Activated naive CD4-positive, alpha-beta T cell treated with anti-CD3 and anti-CD28 coated beads for 36 hours (primary cell): ENCODE measurements at regions of chr12 and their contacts with region 1.

Region 1: GRCh38 chr12:102879144-102879763 is 37.8 kb downstream of the PAH start:
- DNase-seq: peak; percentile 51
- H3K4me3 Mint-ChIP-seq: no peak overlapping the region
- H3K27ac Mint-ChIP-seq: no peak overlapping the region
- H3K4me1 Mint-ChIP-seq: no peaks in the 10 kb centered on the region
- H3K27me3 Mint-ChIP-seq: peaks cover 13% of the 10 kb centered on the region

Region 2: GRCh38 chr12:102169922-102170621 is 709.2 kb before region 1 on chr12:
- CTCF ChIA-PET with region 1: no interaction called
- intact Hi-C with region 1: loop called (anchors 1 kb)
- DNase-seq: peak; percentile 30
- H3K4me3 Mint-ChIP-seq: no peak overlapping the region
- H3K27ac Mint-ChIP-seq: no peak overlapping the region
- H3K4me1 Mint-ChIP-seq: peaks cover 11% of the 10 kb centered on the region
- H3K27me3 Mint-ChIP-seq: no peaks in the 10 kb centered on the region

Region 3: DNA sequence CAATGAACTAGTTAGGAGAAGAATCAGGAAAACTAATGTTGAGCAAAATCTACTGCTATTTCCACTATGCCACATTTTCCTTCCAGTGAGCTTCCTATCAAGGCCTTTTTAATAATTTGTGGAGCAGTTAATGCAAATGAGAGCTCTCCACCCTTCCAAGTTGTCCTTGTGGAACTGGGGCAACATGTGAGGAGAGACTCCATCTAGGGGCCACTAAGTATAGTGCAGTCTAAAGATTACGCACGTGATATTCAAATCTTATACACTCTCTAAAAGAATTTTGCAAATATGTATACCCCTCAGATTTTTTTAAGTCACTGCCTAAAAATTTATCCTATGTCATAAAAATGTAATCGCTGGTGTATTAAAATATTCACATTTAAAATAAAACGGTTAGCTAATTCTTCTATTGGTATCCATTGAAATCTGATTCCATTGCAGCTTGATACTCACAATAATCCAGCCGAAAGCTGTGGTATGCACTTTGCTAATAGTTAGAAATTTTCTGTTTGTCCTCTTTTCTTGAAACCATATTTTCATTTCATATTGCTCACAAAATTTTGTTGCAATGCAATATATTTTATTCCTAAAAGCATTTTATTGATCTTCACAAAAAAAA is 62.3 kb before region 1 on chr12:
- CTCF ChIA-PET with region 1: interaction called, 6 read pairs
- intact Hi-C with region 1: loop called (anchors 5 kb)
- DNase-seq: no peak
- H3K4me3 Mint-ChIP-seq: no peak overlapping the region
- H3K27ac Mint-ChIP-seq: no peak overlapping the region
- H3K4me1 Mint-ChIP-seq: no peaks in the 10 kb centered on the region
- H3K27me3 Mint-ChIP-seq: peaks cover 29% of the 10 kb centered on the region

Region 4: DNA sequence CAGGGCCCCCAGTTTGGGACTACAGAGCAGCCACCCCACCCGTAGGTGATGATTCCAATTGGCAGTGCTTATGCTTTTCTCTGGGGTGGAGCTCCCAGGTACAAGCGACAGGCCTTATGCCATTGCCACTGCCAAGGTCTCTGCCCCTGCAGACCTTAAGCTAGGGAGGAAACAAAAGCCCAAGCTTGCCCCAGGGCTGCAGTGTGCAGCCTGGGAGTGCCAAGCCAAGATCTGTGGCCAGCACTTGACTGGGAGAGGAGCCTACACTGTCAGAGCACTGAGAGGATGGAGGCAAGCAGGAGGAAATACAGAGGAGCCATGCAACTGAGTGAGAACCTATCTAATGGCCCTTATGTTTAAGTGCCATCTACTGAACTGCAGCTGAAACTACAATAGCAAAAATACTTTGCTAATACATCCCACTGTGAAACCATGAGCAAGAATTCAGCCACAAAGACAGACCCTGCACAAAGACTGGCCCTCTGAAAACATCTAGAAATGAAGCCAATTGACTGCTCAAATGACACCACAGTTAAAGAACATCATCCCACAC is 60.5 kb after region 1 on chr12:
- CTCF ChIA-PET with region 1: interaction called, 4 read pairs
- intact Hi-C with region 1: loop called (anchors 1 kb)
- DNase-seq: no peak
- H3K4me3 Mint-ChIP-seq: no peak overlapping the region
- H3K27ac Mint-ChIP-seq: no peak overlapping the region
- H3K4me1 Mint-ChIP-seq: no peaks in the 10 kb centered on the region
- H3K27me3 Mint-ChIP-seq: peaks cover 9% of the 10 kb centered on the region